Heart right ventricle (tissue), 16 donors: ENCODE measurements at regions of chr22 and their contacts with region 1.

Region 1: DNA sequence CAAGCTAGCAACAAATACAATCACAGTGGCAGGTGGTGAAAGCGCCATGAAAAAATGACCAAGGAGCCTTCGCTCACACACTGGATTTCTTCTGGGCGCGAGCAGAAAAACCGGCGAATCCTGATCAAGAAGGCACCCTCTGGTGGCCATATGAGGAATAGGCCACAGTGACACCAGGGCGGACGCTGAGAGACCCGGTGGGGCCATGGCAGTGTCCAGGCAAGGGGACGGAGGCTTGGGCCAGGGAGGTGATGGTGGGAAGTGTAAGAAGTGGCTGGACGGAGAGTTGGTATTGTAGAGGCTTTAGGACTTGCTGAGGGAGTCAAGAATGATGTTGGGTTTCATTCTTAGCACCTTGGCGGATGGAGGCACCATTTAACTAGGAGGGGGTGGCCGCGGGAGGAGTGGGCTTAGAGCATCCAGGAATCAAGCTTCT is 16.9 kb upstream of the RAC2 start:
- DNase-seq: peak; percentile 36 to 50
- ATAC-seq: peak in 7 of 8 donors; percentile 55 to 74 (median 66)
- H3K4me3 ChIP-seq: no peak overlapping the region
- H3K27ac ChIP-seq: no peak overlapping the region
- H3K4me1 ChIP-seq: peaks cover 0 to 21% (median 0%) of the 10 kb centered on the region in 9 donors
- H3K27me3 ChIP-seq: peaks cover 0 to 75% (median 63%) of the 10 kb centered on the region in 7 donors
- CTCF ChIP-seq: peak; percentile 81 to 93 (median 85)

Region 2: DNA sequence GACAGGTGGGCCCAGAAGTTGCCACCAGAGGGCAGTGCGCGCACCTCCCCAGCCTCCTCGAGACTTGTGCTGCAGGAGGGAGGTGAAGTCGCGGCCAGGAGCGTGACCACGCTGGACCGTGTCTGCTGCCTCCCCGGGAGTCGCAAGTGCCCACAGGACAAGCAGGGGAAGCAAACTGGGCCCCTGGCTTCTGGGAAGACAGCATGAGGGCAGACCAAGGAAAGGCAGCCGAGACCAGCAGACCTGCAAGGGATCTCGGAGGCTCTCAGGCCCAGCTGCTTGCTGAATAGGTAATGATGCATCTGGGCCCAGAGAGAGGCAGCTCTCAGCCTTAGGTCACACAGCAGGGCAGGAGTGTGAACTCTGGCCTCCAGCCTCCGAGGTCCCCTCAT is 94.2 kb before region 1 on chr22:
- intact Hi-C with region 1: loop called in 1 of 10 experiments (anchors 2 kb)
- DNase-seq: peak; percentile 85 to 90
- ATAC-seq: peak; percentile 86 to 98 (median 96)
- H3K4me3 ChIP-seq: peak overlapping the region in 5 of 10 donors; percentile 10 to 30 (median 25)
- H3K27ac ChIP-seq: peak overlapping the region in 5 of 10 donors; percentile 43 to 72 (median 55)
- H3K4me1 ChIP-seq: peaks cover 2 to 43% (median 20%) of the 10 kb centered on the region in 9 donors
- H3K27me3 ChIP-seq: peaks cover 0 to 4% (median 0%) of the 10 kb centered on the region in 7 donors
- CTCF ChIP-seq: peak; percentile 89 to 96 (median 94)

Region 3: GRCh38 chr22:37394341-37394740 is 133.4 kb after region 1 on chr22:
- intact Hi-C with region 1: no loop called
- DNase-seq: no peak
- ATAC-seq: no peak
- H3K4me3 ChIP-seq: no peak overlapping the region
- H3K27ac ChIP-seq: no peak overlapping the region
- H3K4me1 ChIP-seq: no peaks in the 10 kb centered on the region
- H3K27me3 ChIP-seq: peaks cover 0 to 43% (median 34%) of the 10 kb centered on the region in 7 donors
- CTCF ChIP-seq: no peak

Region 4: GRCh38 chr22:37457093-37457893 is 196.4 kb after region 1 on chr22:
- intact Hi-C with region 1: loop called in 3 of 10 experiments (anchors 5 to 10 kb)
- DNase-seq: peak; percentile 61
- ATAC-seq: peak; percentile 58 to 88 (median 81)
- H3K4me3 ChIP-seq: no peak overlapping the region
- H3K27ac ChIP-seq: no peak overlapping the region
- H3K4me1 ChIP-seq: peaks cover 0 to 5% (median 0%) of the 10 kb centered on the region in 9 donors
- H3K27me3 ChIP-seq: peaks cover 5 to 77% (median 27%) of the 10 kb centered on the region in 7 donors
- CTCF ChIP-seq: peak; percentile 62 to 93 (median 83)